OCI-LY7 (cell line): ENCODE measurements at regions of chr10 and their contacts with region 1.

Region 1: DNA sequence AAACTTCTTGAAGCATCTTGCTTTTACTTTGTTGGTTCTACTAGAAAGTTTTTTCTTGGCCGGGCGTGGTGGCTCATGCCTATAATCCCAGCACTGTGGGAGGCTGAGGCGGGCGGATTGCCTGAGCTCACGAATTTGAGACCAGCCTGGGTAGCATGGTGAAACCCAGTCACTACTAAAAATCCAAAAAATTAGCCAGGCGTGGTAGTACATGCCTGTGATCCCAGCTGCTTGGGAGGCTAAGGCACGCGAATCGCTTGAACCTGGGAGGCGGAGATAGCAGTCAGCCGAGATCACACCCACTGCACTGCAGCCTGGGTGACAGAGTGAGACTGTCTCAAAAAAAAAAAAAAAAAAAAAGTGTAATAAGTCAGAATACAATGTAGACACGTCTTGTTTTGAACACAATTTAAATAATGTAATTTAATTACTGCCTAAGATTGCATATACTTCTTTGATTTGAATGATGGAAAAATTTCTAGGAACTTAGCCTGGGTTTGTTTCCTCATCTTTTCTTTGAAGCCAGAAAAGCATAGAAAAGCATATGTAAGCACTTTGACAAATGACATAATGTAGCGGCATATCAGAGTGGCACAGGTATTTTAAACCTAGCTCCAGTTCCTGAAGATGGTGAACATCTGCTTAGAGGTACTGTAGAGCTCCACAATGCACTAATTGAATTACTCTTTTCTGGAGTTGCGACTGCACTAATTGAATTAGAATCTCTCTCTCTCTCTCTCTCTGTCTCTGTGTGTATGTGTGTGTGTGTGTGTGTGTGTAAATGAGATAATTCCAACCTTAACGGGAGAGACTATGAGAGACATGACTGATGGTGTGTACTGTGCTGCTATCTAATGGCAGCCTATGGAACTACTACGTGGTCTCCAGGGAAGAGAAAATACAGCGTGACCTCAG is 87.8 kb downstream of the BTRC start:
- DNase-seq: peak; percentile 68
- H3K4me3 ChIP-seq: no peak overlapping the region
- H3K27ac ChIP-seq: no peak overlapping the region
- H3K4me1 ChIP-seq: no peaks in the 10 kb centered on the region
- CTCF ChIP-seq: peak; percentile 86

Region 2: DNA sequence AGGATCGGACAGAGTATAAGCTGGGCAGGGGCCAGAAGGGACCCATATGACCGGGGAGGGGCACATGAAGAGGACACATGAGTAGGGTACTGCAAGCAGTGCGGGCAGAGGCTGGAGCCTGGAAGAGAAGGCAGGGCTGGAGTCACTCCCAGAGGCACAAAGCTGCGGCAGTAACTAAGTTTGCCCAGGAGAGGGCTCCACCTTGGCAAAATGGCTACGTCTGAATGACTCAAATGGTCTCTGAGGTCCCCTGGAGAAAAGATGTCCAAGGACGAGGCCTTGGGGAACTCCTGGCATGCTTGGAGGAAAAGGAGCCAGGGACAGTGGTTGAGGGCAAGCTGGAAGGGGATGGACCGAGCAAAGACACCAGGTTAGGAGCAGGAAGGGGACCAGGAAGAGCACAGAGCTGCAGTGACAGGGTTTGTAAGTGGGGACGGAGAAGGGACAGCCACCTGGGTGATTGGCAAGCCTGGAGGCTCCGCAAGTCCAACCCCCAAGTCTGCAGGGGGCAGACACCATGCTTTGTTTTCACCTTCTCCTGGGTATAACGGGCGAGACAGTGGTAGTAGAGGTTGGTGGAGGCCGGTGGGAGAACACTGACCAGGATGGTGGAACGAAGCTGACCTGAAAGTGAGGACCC is 169.4 kb before region 1 on chr10:
- CTCF ChIA-PET with region 1: no interaction called
- POLR2A ChIA-PET with region 1: interaction called, 3 read pairs
- intact Hi-C with region 1: loop called (anchors 1 kb)
- DNase-seq: peak; percentile 60
- H3K4me3 ChIP-seq: no peak overlapping the region
- H3K27ac ChIP-seq: no peak overlapping the region
- H3K4me1 ChIP-seq: no peaks in the 10 kb centered on the region
- CTCF ChIP-seq: peak; percentile 85

Region 3: GRCh38 chr10:101297901-101298486 is 143.8 kb before region 1 on chr10:
- CTCF ChIA-PET with region 1: no interaction called
- POLR2A ChIA-PET with region 1: no interaction called
- intact Hi-C with region 1: loop called (anchors 5 kb)
- DNase-seq: peak; percentile 64
- H3K4me3 ChIP-seq: no peak overlapping the region
- H3K27ac ChIP-seq: no peak overlapping the region
- H3K4me1 ChIP-seq: no peaks in the 10 kb centered on the region
- CTCF ChIP-seq: peak; percentile 83

Region 4: DNA sequence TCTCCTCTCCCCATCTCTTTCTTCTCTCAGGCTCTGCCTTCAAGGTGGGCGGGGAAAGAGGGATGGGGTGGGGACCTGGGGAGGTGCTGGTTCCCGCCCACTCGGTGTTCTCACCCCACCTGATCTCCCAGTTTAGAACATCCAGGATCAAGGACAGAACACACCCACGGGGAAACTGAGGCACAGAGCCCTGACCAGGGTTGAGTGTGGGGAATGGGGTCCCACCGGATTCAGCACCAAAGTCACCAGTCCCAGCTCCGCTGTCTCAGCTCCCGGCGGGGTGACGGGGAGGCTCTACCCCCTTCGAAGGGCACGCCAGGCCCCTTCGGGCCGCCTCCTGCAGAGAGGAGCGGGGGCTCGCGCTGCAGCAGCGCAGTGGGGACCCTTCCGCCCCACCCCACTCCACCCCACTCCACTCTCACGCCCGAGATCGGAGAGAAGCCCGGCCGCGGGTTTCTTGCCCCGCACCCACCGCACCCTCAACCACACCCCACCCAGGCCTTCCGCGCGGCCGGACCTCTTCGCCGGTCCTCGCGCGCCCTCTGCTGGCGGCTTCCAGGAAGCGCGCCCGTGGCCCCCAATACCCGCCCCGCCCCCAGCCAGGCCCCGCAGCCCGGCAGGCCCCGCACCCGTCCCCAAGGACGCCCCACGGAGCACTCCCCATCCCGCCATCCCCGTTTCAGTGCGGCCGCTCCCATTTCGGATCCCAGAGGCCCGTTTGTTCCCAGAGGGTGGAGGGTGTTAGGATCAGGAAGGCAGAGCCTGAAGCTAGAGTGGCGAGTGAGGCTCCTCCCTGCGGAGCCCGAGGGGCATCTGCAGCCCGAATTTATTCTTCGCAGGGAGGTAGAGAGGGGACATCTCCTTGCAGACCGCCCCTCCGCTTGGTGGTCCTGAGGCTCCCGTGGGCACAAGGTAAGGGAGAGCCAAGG is 128.3 kb after region 1 on chr10:
- CTCF ChIA-PET with region 1: interaction called, 3 read pairs
- POLR2A ChIA-PET with region 1: no interaction called
- intact Hi-C with region 1: loop called (anchors 1 kb)
- DNase-seq: peak; percentile 76
- H3K4me3 ChIP-seq: peak overlapping the region; percentile 66
- H3K27ac ChIP-seq: no peak overlapping the region
- H3K4me1 ChIP-seq: peaks cover 20% of the 10 kb centered on the region
- CTCF ChIP-seq: peak; percentile 81